Ovary (tissue), 10 donors: ENCODE measurements at regions of chr12 and their contacts with region 1.

Region 1: DNA sequence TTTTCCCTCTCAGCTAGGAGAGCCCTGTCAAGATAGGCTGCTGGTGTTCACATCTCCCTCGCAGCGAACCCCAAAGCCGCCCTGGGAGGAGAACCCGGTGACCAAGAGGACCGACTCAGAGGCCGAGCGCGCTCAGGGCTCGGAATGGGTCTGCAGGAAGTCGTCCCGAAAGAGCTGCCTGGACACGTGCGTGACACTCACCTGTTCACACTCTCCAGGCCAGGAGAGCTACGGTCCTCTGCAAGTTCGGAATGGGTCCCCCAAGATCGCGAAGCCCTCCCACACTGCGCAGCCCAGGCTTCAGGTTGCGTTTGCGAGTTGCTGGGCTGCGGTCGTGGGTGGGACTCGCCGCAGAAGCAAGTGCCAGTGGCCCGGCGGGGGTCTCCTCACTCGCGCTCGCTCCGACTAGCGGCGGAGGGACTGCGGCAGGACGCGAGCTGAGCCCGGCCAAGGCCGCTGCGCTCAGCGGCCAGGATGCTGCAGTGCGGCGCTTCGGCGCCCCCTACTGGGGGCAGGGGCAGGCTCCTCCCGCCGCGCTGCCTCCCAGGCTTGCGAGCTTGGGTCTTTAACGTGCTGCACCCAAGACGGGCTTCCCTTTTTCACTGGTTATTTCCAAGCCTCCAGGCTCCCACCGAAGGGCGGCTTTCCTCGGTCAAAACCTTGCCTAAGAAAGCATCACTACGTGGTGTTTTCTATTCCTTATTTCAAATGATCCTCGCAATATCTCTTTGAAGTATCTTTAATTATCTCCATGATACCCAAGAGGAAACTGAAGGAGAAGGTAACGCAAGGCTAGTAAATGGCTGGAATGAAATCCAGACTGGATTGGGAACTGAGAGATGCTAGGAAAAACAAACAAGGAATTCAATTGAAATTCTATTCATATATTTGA is at the start of gene RERG:
- DNase-seq: peak; percentile 85 to 93 (median 90)
- H3K4me3 ChIP-seq: peak within 1 kb of the TSS; percentile 62
- H3K27ac ChIP-seq: peak within 1 kb of the TSS; percentile 45 to 53
- H3K4me1 ChIP-seq: no peaks in the 10 kb centered on the region
- H3K27me3 ChIP-seq: no peaks in the 10 kb centered on the region
- CTCF ChIP-seq: peak; percentile 98 to 99 (median 99)
- EP300 ChIP-seq: no peak
- POLR2A ChIP-seq: peak; percentile 65
- total RNA-seq, gene RERG: 12.9 to 87.2 (median 36.7) TPM

Region 2: GRCh38 chr12:13504074-13504473 is 1717.2 kb before region 1 on chr12:
- intact Hi-C with region 1: no loop called
- DNase-seq: no peak
- H3K4me3 ChIP-seq: no peak overlapping the region
- H3K27ac ChIP-seq: no peak overlapping the region
- H3K4me1 ChIP-seq: no peaks in the 10 kb centered on the region
- H3K27me3 ChIP-seq: no peaks in the 10 kb centered on the region
- CTCF ChIP-seq: no peak
- EP300 ChIP-seq: no peak
- POLR2A ChIP-seq: no peak

Region 3: DNA sequence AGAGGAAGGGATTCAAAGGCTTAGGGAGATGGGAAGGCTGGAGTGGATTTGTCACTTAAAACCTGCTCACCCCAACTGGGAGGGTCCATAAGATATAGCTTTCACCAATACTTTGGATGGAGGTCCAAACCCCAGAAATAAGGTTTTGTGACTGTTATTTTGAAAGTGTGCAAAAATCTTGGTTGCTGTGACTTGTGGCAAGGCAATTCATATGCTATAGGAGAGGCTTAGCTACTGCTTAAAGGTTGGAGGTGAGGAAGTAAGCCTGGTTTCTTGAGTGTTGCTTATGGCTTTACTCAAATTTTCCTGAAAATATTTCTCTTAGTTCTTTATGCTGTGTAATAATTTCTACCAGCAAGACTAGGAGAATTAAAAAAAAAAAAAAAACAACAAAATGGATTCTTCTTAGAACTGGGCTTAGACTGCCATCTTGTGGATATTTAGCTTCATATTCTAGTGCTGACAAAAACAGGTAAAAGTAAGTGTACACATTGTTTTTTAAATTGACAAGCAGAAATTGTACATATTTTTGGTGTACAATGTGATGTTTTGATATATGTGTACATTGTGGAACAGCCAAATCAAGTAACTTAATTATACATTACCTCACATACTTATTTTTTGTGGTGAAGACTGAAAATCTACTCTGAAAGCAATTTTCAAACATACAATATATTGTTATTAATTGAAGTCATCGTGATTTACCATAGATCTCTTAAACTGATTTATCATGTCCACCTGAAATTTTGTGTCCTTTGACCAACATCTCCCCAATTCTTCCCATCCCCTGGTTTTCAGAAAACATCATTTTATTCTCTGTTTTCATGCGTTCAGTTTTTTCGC is 225.4 kb before region 1 on chr12:
- intact Hi-C with region 1: loop called in 3 of 4 experiments (anchors 5 to 10 kb)
- DNase-seq: no peak
- H3K4me3 ChIP-seq: no peak overlapping the region
- H3K27ac ChIP-seq: no peak overlapping the region
- H3K4me1 ChIP-seq: peaks cover 1% of the 10 kb centered on the region
- H3K27me3 ChIP-seq: no peaks in the 10 kb centered on the region
- CTCF ChIP-seq: peak in 1 of 3 donors; percentile 36
- EP300 ChIP-seq: no peak
- POLR2A ChIP-seq: no peak

Region 4: DNA sequence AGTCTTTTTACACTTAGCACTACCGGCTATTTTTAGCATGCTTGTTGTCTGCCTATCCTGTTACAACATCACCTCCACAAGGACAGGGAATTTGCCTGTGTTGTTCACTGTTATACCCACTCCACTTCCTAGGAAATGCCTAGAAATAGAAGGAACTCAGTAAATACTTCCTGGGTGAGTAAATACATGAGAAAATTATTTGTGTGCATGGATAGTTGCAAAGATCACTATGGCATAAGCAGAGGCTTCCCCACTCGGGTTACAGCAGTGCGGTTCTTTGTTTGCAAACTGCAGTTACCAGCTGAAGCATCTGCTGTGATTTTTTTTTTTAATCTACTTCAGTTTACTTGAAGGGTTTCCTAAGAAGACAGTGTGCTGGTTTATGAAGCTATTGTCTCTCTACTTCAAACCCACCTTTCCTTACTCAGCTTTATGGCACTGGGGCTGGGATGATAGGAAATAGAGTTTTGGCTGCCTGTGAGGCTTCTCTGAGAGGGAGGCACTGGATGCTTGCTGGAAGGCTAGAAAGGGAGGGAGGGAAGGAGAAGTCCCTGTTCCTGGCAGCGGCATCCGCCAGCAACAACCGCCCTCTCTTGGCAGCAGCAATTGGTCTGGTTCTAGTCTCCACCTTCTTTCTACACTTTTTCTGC is 219.4 kb before region 1 on chr12:
- intact Hi-C with region 1: loop called in 3 of 4 experiments (anchors 5 to 10 kb)
- DNase-seq: peak; percentile 52 to 80 (median 63)
- H3K4me3 ChIP-seq: peak overlapping the region; percentile 2
- H3K27ac ChIP-seq: no peak overlapping the region
- H3K4me1 ChIP-seq: peaks cover 3% of the 10 kb centered on the region
- H3K27me3 ChIP-seq: no peaks in the 10 kb centered on the region
- CTCF ChIP-seq: no peak
- EP300 ChIP-seq: no peak
- POLR2A ChIP-seq: no peak

Region 5: DNA sequence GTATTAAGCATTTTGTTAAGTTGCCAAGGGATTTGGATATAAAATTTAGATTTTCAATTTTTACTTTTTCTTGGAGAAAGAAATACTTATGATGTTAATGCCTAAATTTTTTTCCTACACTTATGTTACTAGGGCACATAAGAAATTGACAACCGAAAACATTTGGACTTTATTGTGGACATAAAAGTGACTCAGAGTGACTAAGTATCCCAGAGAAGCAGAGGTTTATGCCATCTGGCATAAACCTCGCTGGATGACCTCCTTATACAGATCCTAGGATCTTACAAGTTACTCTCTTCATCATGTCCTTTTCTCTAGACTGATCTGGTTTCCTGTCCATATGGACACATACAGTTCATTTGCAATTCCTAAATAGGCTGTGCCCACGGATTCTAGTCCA is 89.8 kb before region 1 on chr12:
- intact Hi-C with region 1: no loop called
- DNase-seq: no peak
- H3K4me3 ChIP-seq: no peak overlapping the region
- H3K27ac ChIP-seq: no peak overlapping the region
- H3K4me1 ChIP-seq: no peaks in the 10 kb centered on the region
- H3K27me3 ChIP-seq: no peaks in the 10 kb centered on the region
- CTCF ChIP-seq: no peak
- EP300 ChIP-seq: no peak
- POLR2A ChIP-seq: no peak

Region 6: DNA sequence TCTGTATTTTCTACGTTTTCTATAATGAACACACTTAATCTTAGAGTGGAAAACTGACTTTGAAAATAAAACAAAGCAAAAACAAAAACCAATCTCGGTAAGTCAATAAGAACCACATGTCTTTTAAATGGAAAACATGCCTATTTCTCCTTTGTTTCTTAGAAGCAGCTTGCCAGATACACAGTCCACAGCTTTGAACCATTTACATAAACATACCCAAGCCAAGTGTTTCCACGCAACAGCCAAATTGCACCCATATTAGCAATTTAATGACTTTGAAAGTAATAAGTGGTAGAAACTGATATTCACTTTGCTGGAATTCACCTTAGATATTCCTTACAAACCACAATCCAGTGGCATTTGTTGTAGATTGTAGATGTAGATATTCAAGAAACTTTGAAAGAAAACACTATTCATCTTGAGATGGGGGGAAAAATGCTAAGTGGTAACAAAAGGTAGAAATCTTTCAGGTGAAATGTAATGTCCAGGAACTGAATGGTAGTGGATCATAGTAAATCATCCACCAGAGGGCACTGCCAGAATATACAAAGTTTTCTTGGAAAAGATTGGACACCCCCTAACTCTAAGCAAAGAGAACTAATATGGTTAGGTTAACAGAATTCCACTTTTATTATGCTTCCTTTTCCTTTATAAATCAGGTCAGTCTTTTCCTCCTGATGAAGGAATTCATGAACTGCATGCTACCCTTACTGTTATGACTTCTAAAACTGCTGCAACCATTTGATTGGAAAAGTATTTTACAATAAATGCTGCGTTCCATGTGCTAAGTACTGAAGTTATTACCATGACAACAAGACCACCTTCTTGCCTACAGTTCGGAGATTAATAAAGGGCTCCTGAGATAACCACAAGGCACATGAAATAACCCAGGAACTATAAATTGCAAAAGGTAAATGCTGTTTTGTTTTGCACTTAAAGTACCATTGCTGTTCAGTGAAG is 69.8 kb before region 1 on chr12:
- intact Hi-C with region 1: loop called (anchors 2 to 5 kb)
- DNase-seq: peak in 1 of 5 donors; percentile 50
- H3K4me3 ChIP-seq: no peak overlapping the region
- H3K27ac ChIP-seq: peak overlapping the region; percentile 9 to 44
- H3K4me1 ChIP-seq: peaks cover 14% of the 10 kb centered on the region
- H3K27me3 ChIP-seq: no peaks in the 10 kb centered on the region
- CTCF ChIP-seq: peak; percentile 35 to 91 (median 78)
- EP300 ChIP-seq: no peak
- POLR2A ChIP-seq: no peak

Region 7: DNA sequence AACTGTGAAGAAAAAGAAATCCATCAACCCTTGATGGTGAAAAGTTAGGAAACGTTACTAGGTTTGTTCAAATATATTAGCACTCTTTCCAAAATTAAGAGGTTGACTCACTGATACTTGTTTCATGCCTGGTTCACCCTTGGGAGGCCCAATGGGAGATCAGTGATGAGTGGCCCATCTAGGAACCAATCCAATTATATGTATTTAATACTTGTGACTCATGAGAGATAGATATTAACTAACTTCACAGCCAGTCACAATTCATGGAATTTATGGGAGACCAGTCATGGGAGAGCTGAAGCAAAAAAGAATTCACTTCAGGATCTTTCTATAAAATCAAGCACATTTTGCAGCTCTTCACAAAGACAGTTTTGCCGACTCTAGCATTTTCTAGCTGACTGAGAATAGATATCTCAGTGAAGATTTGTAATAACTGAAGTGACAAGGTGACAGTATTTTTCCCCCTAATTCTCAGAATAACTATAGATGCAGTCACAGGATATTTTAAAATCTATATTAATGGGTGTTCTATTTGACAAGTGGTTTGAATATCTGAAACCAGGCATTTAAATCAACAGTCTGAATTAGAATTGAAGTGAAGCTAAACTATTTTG is 337.8 kb after region 1 on chr12:
- intact Hi-C with region 1: no loop called
- DNase-seq: no peak
- H3K4me3 ChIP-seq: no peak overlapping the region
- H3K27ac ChIP-seq: no peak overlapping the region
- H3K4me1 ChIP-seq: no peaks in the 10 kb centered on the region
- H3K27me3 ChIP-seq: no peaks in the 10 kb centered on the region
- CTCF ChIP-seq: no peak
- EP300 ChIP-seq: no peak
- POLR2A ChIP-seq: no peak